K562 (cell line): ENCODE measurements at regions of chr3 and their contacts with region 1.

Region 1: GRCh38 chr3:137032465-137033120 is 74.8 kb downstream of the IL20RB start:
- DNase-seq: peak; percentile 72 to 77 (median 75)
- ATAC-seq: peak; percentile 90
- H3K4me3 ChIP-seq: no peak overlapping the region
- H3K27ac ChIP-seq: no peak overlapping the region
- H3K4me1 ChIP-seq: peaks cover 0 to 3% of the 10 kb centered on the region in 2 experiments; a peak in 3 of 5 replicates
- H3K27me3 ChIP-seq: peaks cover 3 to 11% of the 10 kb centered on the region in 2 experiments; a peak in 3 of 5 replicates
- CTCF ChIP-seq: peak; percentile 74 to 89 (median 79)
- EP300 ChIP-seq: no peak
- POLR2A ChIP-seq: no peak
- RAD21 ChIP-seq: peak; percentile 41 to 60

Region 2: DNA sequence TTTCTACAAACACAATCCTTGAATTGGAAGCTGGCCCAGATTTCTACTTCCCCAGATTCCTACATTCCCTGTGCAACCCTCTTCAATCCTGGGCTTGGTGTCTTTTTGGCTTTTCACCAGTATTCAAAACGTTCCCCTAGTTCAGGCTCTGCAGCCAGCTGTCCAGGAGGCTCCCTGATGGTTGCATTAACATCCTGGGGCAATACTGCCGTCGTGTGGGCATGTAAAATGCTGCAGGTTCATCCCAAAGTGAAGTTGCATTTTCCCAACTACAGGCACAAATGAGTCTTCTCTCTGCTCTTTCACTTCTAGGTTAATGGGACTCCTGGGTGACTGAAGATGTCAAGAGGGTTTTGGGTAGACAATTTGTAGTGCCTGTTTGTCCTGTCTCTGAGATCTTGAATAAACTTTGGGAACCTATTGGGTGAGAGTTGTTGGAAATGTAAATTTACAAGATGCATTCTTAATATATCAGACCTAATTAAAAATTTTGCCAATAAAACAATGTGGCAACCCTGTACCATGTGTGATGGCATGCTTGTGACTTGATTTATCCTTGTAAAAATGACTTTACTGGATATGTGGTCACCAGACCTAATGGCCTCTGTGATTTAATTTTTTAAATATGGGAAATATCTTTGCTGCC is 760.2 kb after region 1 on chr3:
- CTCF ChIA-PET with region 1: no interaction called
- POLR2A ChIA-PET with region 1: no interaction called
- in situ Hi-C with region 1: no loop called
- intact Hi-C with region 1: loop called (anchors 10 kb)
- DNase-seq: peak; percentile 32 to 49 (median 38)
- ATAC-seq: peak; percentile 52; the same call in 1 of the 3 replicates
- H3K4me3 ChIP-seq: no peak overlapping the region
- H3K27ac ChIP-seq: no peak overlapping the region
- H3K4me1 ChIP-seq: no peaks in the 10 kb centered on the region
- H3K27me3 ChIP-seq: no peaks in the 10 kb centered on the region
- CTCF ChIP-seq: peak; percentile 38 to 51 (median 44); a peak in 4 of 6 replicates
- EP300 ChIP-seq: no peak
- POLR2A ChIP-seq: no peak
- RAD21 ChIP-seq: peak; percentile 54 to 67

Region 3: GRCh38 chr3:137970914-137971831 is 938.6 kb after region 1 on chr3:
- CTCF ChIA-PET with region 1: no interaction called
- POLR2A ChIA-PET with region 1: no interaction called
- in situ Hi-C with region 1: no loop called
- intact Hi-C with region 1: loop called (anchors 5 kb)
- DNase-seq: peak; percentile 42 to 58 (median 52)
- ATAC-seq: peak; percentile 97
- H3K4me3 ChIP-seq: no peak overlapping the region
- H3K27ac ChIP-seq: no peak overlapping the region
- H3K4me1 ChIP-seq: no peaks in the 10 kb centered on the region
- H3K27me3 ChIP-seq: no peaks in the 10 kb centered on the region
- CTCF ChIP-seq: peak; percentile 66 to 82 (median 73)
- EP300 ChIP-seq: no peak
- POLR2A ChIP-seq: no peak
- RAD21 ChIP-seq: peak; percentile 43 to 70; a peak in 3 of 4 replicates